ENCODE measurements at regions of chr1 and their contacts with region 1.

Region 1: DNA sequence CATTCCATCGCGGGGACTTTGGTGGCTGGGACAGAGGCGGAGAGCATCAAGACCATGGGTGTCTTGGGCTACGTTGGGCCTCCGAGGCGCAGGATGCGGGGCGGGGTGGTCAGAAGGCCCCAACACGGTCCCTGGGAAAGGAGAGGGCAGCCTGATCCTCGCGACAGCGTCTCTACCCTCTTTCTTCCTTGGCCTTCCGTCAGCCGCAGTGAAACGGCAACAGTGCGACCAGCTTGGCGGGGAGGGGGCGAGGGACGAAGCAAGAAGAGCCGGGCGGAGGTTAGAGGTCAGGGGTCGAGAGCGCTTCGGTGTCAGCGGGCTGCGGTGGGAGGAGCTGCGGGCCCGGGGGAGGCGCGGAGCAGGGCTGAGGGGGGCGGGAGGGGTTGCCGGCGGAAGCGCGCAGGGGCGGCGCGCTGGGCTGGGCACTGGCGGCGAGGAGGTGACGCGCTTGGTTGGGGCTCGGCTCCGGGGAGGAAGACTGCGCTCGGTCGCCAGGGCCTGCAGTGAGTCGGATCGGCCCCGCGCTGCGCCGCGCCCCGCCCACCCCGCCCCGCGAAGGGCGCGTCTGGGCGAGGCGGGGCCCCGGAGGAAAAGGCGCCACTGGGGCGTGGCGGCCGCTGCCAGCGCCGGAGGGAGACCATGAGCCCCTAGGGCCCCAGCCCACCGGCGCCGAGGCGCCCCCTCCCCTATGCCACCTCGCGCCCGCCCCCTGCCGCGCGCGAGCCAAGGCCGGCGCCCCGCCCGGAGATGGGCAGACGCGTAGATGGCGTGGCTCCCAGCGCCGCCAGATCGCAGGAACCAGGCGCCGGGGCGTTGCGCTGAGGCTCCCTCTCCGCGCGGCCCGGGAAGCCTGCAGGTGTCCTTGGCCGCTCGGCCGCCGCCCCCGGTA is at the start of gene KCNC4:
- DNase-seq: peak; percentile 96
- ATAC-seq: peak; percentile 85
- H3K4me3 ChIP-seq: peak within 1 kb of the TSS; percentile 34 to 75 (median 66)
- H3K4me3 Mint-ChIP-seq: peak within 1 kb of the TSS; percentile 95
- H3K27ac ChIP-seq: peak within 1 kb of the TSS; percentile 76 to 83
- H3K27ac Mint-ChIP-seq: peak within 1 kb of the TSS; percentile 96
- H3K4me1 ChIP-seq: peaks cover 17 to 31% of the 10 kb centered on the region in 2 donors
- H3K4me1 Mint-ChIP-seq: peaks cover 43% of the 10 kb centered on the region
- H3K27me3 ChIP-seq: peaks cover 0 to 8% (median 0%) of the 10 kb centered on the region in 4 experiments
- H3K27me3 Mint-ChIP-seq: no peaks in the 10 kb centered on the region
- CTCF ChIP-seq: no peak
- total RNA-seq, gene KCNC4: 24.1 and 24.3 TPM in 2 replicates

Region 2: GRCh38 chr1:110196917-110197765 is 12.8 kb before region 1 on chr1:
- CTCF ChIA-PET with region 1: interaction called, 51 read pairs
- POLR2A ChIA-PET with region 1: interaction called, 3 read pairs
- intact Hi-C with region 1: no loop called
- DNase-seq: peak; percentile 71
- ATAC-seq: peak; percentile 93
- H3K4me3 ChIP-seq: no peak overlapping the region
- H3K4me3 Mint-ChIP-seq: no peak overlapping the region
- H3K27ac ChIP-seq: no peak overlapping the region
- H3K27ac Mint-ChIP-seq: no peak overlapping the region
- H3K4me1 ChIP-seq: no peaks in the 10 kb centered on the region
- H3K4me1 Mint-ChIP-seq: no peaks in the 10 kb centered on the region
- H3K27me3 ChIP-seq: peaks cover 0 to 3% (median 0%) of the 10 kb centered on the region in 4 experiments
- H3K27me3 Mint-ChIP-seq: peaks cover 4% of the 10 kb centered on the region
- CTCF ChIP-seq: peak; percentile 97

Region 3: DNA sequence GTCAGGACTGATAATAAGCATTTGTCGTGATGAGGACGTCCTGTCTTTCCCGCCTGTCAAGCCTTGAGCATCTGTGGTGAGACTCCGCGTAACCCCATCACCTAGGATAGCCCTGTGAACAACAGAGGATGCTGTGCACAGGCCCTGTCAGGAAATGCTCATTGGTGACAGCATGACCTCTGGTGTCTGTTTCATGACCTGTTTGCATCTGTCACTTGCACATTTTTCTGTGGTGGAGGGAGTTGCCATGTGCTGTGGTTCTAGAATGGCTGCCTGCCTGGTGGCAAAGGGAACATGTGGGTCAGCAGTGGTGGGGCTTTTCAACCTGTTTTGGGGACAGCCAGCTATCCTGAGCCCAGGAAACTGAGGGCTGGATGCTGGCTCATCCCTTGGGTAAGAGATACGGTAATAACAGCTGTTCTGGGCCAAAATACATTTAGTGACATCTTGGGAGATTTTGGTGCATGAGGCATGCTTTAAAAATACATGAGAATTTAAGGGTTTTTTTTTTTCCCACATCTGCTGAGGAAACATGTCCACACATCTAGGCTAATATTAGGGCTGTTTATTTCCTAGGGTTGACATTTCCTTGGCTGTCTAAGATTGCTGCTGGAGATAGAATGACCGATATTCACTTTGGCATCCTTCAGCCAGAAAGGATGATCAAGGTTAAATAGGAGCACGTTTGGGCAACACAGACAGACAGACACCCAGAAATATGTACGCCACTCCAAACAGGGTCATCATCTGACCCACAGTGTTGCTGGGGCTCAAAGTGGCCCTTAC is 53.1 kb after region 1 on chr1:
- CTCF ChIA-PET with region 1: interaction called, 23 read pairs
- POLR2A ChIA-PET with region 1: no interaction called
- intact Hi-C with region 1: no loop called
- DNase-seq: no peak
- ATAC-seq: no peak
- H3K4me3 ChIP-seq: no peak overlapping the region
- H3K4me3 Mint-ChIP-seq: no peak overlapping the region
- H3K27ac ChIP-seq: no peak overlapping the region
- H3K27ac Mint-ChIP-seq: no peak overlapping the region
- H3K4me1 ChIP-seq: peaks cover 4 to 9% of the 10 kb centered on the region in 2 donors
- H3K4me1 Mint-ChIP-seq: peaks cover 6% of the 10 kb centered on the region
- H3K27me3 ChIP-seq: peaks cover 0 to 3% (median 0%) of the 10 kb centered on the region in 4 experiments
- H3K27me3 Mint-ChIP-seq: no peaks in the 10 kb centered on the region
- CTCF ChIP-seq: no peak

Region 4: GRCh38 chr1:110384581-110385321 is 174.8 kb after region 1 on chr1:
- CTCF ChIA-PET with region 1: interaction called, 42 read pairs
- POLR2A ChIA-PET with region 1: no interaction called
- intact Hi-C with region 1: no loop called
- DNase-seq: peak; percentile 91
- ATAC-seq: peak; percentile 77
- H3K4me3 ChIP-seq: peak overlapping the region; percentile 34 to 49 (median 42)
- H3K4me3 Mint-ChIP-seq: peak overlapping the region; percentile 78
- H3K27ac ChIP-seq: peak overlapping the region; percentile 87 to 98
- H3K27ac Mint-ChIP-seq: peak overlapping the region; percentile 90
- H3K4me1 ChIP-seq: peaks cover 61 to 79% of the 10 kb centered on the region in 2 donors
- H3K4me1 Mint-ChIP-seq: peaks cover 76% of the 10 kb centered on the region
- H3K27me3 ChIP-seq: no peaks in the 10 kb centered on the region
- H3K27me3 Mint-ChIP-seq: no peaks in the 10 kb centered on the region
- CTCF ChIP-seq: no peak

Region 5: GRCh38 chr1:110420874-110421793 is 211.2 kb after region 1 on chr1:
- CTCF ChIA-PET with region 1: interaction called, 153 read pairs
- POLR2A ChIA-PET with region 1: no interaction called
- intact Hi-C with region 1: no loop called
- DNase-seq: no peak
- ATAC-seq: no peak
- H3K4me3 ChIP-seq: no peak overlapping the region
- H3K4me3 Mint-ChIP-seq: no peak overlapping the region
- H3K27ac ChIP-seq: no peak overlapping the region
- H3K27ac Mint-ChIP-seq: no peak overlapping the region
- H3K4me1 ChIP-seq: no peaks in the 10 kb centered on the region
- H3K4me1 Mint-ChIP-seq: no peaks in the 10 kb centered on the region
- H3K27me3 ChIP-seq: peaks cover 0 to 5% (median 0%) of the 10 kb centered on the region in 4 experiments
- H3K27me3 Mint-ChIP-seq: peaks cover 5% of the 10 kb centered on the region
- CTCF ChIP-seq: no peak